ENCODE measurements at regions of chr22 and their contacts with region 1.

Region 1: GRCh38 chr22:45101515-45102227 is 62.1 kb upstream of the NUP50 start:
- DNase-seq: peak; percentile 34 to 74
- ATAC-seq: peak; percentile 83 to 94; a peak in 5 of 6 replicates
- H3K4me3 ChIP-seq: no peak overlapping the region
- H3K27ac ChIP-seq: no peak overlapping the region
- H3K4me1 ChIP-seq: peaks cover 2% of the 10 kb centered on the region; the same call in 1 of the 3 replicates
- CTCF ChIP-seq: peak; percentile 49
- EP300 ChIP-seq: no peak
- POLR2A ChIP-seq: no peak
- RAD21 ChIP-seq: peak; percentile 71 to 75

Region 2: GRCh38 chr22:45263463-45264269 is 162.0 kb after region 1 on chr22:
- CTCF ChIA-PET with region 1: interaction called, 10 read pairs
- POLR2A ChIA-PET with region 1: no interaction called
- DNase-seq: peak; percentile 80 to 81
- ATAC-seq: peak; percentile 90 to 96
- H3K4me3 ChIP-seq: no peak overlapping the region
- H3K27ac ChIP-seq: peak overlapping the region; percentile 60 to 87
- H3K4me1 ChIP-seq: peaks cover 12% of the 10 kb centered on the region
- CTCF ChIP-seq: peak; percentile 60
- EP300 ChIP-seq: no peak
- POLR2A ChIP-seq: no peak
- RAD21 ChIP-seq: peak; percentile 83 to 84

Measured in A549 (cell line).